H1 (cell line): ENCODE measurements at regions of chr6 and their contacts with region 1.

Region 1: GRCh38 chr6:99330159-99330558 is 19.3 kb downstream of the FAXC start:
- DNase-seq: no peak
- H3K4me3 ChIP-seq: no peak overlapping the region
- H3K27ac ChIP-seq: no peak overlapping the region
- H3K4me1 ChIP-seq: peaks cover 0 to 4% (median 1%) of the 10 kb centered on the region in 4 experiments; a peak in 3 of 7 replicates
- H3K27me3 ChIP-seq: no peaks in the 10 kb centered on the region
- CTCF ChIP-seq: peak; percentile 43 to 79 (median 63)
- EP300 ChIP-seq: no peak
- POLR2A ChIP-seq: no peak
- RAD21 ChIP-seq: peak; percentile 74 to 75

Region 2: DNA sequence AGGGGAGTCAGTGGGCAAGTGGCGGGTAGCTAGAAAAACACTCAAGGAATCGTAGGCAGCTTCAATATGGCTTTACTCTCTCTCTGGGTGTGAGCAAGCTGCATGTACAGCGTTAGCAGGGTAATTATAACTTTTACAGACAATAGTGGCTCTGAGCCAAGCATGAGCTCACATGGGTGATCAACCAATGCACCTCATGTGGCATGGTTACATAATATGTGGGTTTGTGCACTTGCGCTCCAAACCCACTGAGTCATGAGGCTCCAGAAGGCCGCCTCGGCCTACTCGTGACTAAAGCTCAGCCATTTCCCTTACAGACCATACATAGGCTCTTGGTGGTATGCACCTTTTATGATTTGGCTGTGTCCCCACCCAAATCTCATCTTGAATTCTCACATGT is 304.0 kb before region 1 on chr6:
- CTCF ChIA-PET with region 1: no interaction called
- POLR2A ChIA-PET with region 1: no interaction called
- DNase-seq: no peak
- H3K4me3 ChIP-seq: no peak overlapping the region
- H3K27ac ChIP-seq: no peak overlapping the region
- H3K4me1 ChIP-seq: no peaks in the 10 kb centered on the region
- H3K27me3 ChIP-seq: no peaks in the 10 kb centered on the region
- CTCF ChIP-seq: no peak
- EP300 ChIP-seq: no peak
- POLR2A ChIP-seq: no peak
- RAD21 ChIP-seq: no peak

Region 3: GRCh38 chr6:99305021-99305554 is 25.1 kb before region 1 on chr6:
- CTCF ChIA-PET with region 1: interaction called, 11 read pairs
- POLR2A ChIA-PET with region 1: no interaction called
- DNase-seq: no peak
- H3K4me3 ChIP-seq: no peak overlapping the region
- H3K27ac ChIP-seq: no peak overlapping the region
- H3K4me1 ChIP-seq: peaks cover 0 to 5% (median 3%) of the 10 kb centered on the region in 4 experiments; a peak in 2 of 7 replicates
- H3K27me3 ChIP-seq: no peaks in the 10 kb centered on the region
- CTCF ChIP-seq: no peak
- EP300 ChIP-seq: no peak
- POLR2A ChIP-seq: no peak
- RAD21 ChIP-seq: no peak

Region 4: DNA sequence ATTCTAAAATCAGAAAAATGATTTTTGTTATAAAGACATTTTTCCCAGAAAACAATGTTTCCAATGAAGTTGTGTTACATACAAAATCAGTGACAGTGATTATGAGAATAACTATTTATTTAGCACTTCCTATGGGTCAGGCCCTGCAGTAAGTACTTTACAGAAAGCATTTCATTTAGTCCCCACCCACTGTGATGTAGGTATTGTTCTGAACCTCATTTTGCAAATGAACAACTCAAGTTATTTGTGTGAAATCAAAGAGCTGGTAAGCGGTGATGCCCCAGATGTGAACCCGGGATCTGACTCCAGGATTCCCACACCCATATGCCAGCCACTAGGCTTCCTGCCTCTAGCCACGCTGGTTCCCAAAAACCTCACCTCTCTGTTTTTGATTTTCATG is 11.6 kb before region 1 on chr6:
- CTCF ChIA-PET with region 1: interaction called, 42 read pairs
- POLR2A ChIA-PET with region 1: interaction called, 4 read pairs
- DNase-seq: no peak
- H3K4me3 ChIP-seq: no peak overlapping the region
- H3K27ac ChIP-seq: no peak overlapping the region
- H3K4me1 ChIP-seq: peaks cover 0 to 2% (median 0%) of the 10 kb centered on the region in 4 experiments; a peak in 1 of 7 replicates
- H3K27me3 ChIP-seq: no peaks in the 10 kb centered on the region
- CTCF ChIP-seq: no peak
- EP300 ChIP-seq: no peak
- POLR2A ChIP-seq: no peak
- RAD21 ChIP-seq: no peak

Region 5: GRCh38 chr6:99349171-99350141 is 19.3 kb after region 1 on chr6 and contains the start of gene FAXC:
- CTCF ChIA-PET with region 1: interaction called, 67 read pairs
- POLR2A ChIA-PET with region 1: interaction called, 9 read pairs
- DNase-seq: peak in 1 of 2 experiments; percentile 81
- H3K4me3 ChIP-seq: peak within 1 kb of the TSS; percentile 86 to 96 (median 90)
- H3K27ac ChIP-seq: peak within 1 kb of the TSS; percentile 62; the same call in 1 of the 2 replicates
- H3K4me1 ChIP-seq: peaks cover 0 to 9% (median 6%) of the 10 kb centered on the region in 4 experiments; a peak in 6 of 7 replicates
- H3K27me3 ChIP-seq: no peaks in the 10 kb centered on the region; a peak in 1 of 7 replicates
- CTCF ChIP-seq: peak; percentile 31 to 45 (median 35)
- EP300 ChIP-seq: no peak
- POLR2A ChIP-seq: peak; percentile 72 to 73
- RAD21 ChIP-seq: peak; percentile 36 to 47; a peak in 2 of 4 replicates
- total RNA-seq, gene FAXC: 25.6 and 29.8 TPM in 2 replicates

Region 6: DNA sequence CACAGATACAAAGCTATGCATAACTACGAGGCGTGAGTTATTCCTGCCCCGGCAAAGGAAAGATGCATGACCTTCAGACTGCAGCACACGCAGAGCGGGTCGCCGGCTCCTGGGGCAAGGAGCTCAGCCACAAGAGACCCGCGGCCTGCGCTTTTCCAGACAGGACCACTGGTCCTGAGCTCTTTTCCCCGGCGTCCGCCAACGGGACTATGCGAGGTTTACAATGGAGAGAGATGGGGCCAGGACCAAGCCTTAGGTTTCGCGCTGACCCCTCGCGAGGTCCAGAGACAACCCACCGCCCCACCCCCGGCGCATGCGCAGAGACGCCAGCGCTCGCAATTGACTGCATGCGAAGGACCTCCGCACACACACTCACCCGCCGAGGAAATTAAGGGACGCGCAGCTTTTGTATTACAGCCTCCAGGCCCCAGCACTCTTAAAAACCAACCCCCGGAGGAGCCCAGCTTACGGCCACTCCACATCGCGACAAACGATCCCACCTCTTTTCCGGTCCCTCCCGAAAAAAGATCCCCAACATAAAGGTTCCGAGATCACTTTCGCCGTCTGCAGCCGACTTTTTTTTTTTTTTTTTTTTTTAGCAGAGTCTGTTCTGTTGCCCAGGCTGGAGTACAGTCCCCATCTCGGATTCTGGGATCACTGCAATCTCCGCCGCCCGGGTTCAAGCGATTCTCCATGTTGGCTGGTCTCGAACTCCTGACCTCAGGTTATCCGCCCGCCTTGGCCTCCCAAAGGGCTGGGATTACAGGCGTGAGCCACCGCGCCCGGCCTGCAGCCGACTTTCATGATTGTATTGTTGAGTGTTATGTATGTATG is 63.8 kb after region 1 on chr6 and contains the start of gene COQ3:
- CTCF ChIA-PET with region 1: interaction called, 65 read pairs
- POLR2A ChIA-PET with region 1: interaction called, 15 read pairs
- DNase-seq: peak; percentile 63 to 94
- H3K4me3 ChIP-seq: peak within 1 kb of the TSS; percentile 77 to 86 (median 82)
- H3K27ac ChIP-seq: peak within 1 kb of the TSS; percentile 83
- H3K4me1 ChIP-seq: no peaks in the 10 kb centered on the region
- H3K27me3 ChIP-seq: no peaks in the 10 kb centered on the region
- CTCF ChIP-seq: no peak
- EP300 ChIP-seq: no peak
- POLR2A ChIP-seq: peak; percentile 81 to 96
- RAD21 ChIP-seq: peak in 1 of 2 experiments; percentile 6; a peak in 1 of 4 replicates
- total RNA-seq, gene COQ3: 16.2 and 16.6 TPM in 2 replicates

Region 7: DNA sequence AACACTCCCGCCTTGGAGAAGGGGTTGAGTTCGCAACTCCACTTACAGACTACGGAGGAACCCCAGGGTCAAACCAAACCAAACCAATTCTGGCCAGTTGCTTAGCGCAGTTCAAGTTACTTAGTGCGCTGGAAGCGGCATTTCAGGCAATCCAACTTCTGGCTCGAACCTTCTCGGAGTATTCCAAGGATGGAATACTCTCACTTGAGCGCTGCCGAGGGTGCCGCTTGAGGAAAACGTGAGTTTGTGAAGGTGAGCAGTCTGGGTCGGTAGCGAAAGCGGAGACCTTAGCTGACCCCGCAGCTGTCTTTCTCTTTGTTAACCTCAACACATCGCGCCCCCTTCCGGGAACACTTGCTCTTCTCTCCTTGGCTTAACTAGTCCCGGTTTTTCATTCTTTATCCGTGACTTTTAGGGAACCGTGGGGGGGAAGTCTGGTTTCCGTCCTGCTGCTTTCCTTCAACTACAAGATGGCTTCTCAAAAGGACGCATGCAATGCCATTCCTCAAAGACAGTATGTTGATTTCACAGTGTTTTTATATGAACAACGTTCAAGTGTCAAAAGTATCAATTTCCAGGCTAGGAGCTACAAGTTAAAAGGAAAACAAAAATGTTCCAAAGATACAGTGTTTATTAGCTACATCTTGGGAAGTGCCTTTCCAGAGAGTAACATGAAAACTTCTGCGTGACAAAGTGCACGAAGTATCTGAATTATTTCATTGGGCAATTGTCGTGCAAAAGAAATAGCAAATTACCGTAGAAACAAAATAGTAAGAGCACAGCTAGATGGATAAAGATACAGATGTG is 95.7 kb after region 1 on chr6:
- CTCF ChIA-PET with region 1: interaction called, 34 read pairs
- POLR2A ChIA-PET with region 1: interaction called, 12 read pairs
- DNase-seq: peak; percentile 87 to 90
- H3K4me3 ChIP-seq: peak overlapping the region; percentile 79 to 99 (median 92)
- H3K27ac ChIP-seq: peak overlapping the region; percentile 97
- H3K4me1 ChIP-seq: peaks cover 0 to 11% (median 5%) of the 10 kb centered on the region in 4 experiments; a peak in 4 of 7 replicates
- H3K27me3 ChIP-seq: no peaks in the 10 kb centered on the region
- CTCF ChIP-seq: peak; percentile 37 to 63 (median 44); a peak in 3 of 4 replicates
- EP300 ChIP-seq: peak in 1 of 2 experiments; percentile 85; a peak in 1 of 3 replicates
- POLR2A ChIP-seq: peak in 1 of 2 experiments; percentile 79; a peak in 2 of 3 replicates
- RAD21 ChIP-seq: peak; percentile 34 to 42

Region 8: DNA sequence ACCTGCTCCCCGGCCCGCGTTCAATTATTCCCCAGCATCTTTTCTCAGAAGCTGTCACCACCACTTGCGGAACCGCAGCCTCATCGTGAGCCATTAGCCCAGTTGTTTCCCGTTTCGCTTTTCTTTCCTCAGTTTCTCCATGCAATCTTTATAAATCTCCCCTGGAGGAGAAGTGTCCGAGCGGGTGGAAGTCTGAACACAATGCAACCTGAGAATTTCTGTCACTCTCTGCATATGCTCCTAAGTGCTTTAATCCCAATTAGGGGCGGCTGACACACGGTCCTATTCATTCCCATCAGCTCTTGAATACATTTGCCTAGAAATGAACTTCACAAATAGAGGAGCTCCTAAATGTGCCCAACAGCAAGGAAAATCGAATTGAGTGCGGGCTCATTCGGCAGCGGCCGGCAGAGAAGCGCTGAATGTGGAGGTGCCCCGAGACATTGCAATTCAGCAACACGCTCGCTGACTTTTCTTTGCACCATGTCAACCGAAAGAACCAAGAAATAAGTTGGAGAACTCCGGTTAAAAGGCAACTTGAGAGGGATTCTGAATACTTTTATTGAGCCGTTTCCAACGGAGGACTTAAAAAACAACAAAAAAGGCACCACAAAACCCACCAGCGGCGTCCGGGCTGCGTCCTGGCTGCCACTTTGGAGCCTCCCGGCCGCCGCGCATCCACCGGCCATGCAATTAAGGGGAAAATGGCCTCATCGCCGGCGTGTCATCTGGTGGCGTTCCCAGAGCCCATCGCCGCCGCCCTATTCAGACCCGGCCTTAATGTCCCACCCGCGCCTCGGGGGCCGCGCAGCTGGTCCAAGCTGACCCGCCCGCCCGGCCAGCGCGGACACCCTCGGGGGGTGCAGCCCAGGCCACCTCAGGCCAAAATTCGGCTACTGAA is 272.6 kb after region 1 on chr6:
- CTCF ChIA-PET with region 1: no interaction called
- POLR2A ChIA-PET with region 1: no interaction called
- DNase-seq: peak in 1 of 2 experiments; percentile 70
- H3K4me3 ChIP-seq: peak overlapping the region in 2 of 4 experiments; percentile 11 to 53; a peak in 4 of 8 replicates
- H3K27ac ChIP-seq: no peak overlapping the region
- H3K4me1 ChIP-seq: peaks cover 0 to 20% (median 7%) of the 10 kb centered on the region in 4 experiments; a peak in 5 of 7 replicates
- H3K27me3 ChIP-seq: peaks cover 82 to 98% (median 88%) of the 10 kb centered on the region in 4 experiments
- CTCF ChIP-seq: no peak
- EP300 ChIP-seq: no peak
- POLR2A ChIP-seq: no peak
- RAD21 ChIP-seq: no peak